Cardiac septum (tissue), 1 donor: ENCODE measurements at regions of chr5 and their contacts with region 1.

Region 1: GRCh38 chr5:36739751-36740221 is 133.4 kb downstream of the SLC1A3 start:
- DNase-seq: no peak

Region 2: DNA sequence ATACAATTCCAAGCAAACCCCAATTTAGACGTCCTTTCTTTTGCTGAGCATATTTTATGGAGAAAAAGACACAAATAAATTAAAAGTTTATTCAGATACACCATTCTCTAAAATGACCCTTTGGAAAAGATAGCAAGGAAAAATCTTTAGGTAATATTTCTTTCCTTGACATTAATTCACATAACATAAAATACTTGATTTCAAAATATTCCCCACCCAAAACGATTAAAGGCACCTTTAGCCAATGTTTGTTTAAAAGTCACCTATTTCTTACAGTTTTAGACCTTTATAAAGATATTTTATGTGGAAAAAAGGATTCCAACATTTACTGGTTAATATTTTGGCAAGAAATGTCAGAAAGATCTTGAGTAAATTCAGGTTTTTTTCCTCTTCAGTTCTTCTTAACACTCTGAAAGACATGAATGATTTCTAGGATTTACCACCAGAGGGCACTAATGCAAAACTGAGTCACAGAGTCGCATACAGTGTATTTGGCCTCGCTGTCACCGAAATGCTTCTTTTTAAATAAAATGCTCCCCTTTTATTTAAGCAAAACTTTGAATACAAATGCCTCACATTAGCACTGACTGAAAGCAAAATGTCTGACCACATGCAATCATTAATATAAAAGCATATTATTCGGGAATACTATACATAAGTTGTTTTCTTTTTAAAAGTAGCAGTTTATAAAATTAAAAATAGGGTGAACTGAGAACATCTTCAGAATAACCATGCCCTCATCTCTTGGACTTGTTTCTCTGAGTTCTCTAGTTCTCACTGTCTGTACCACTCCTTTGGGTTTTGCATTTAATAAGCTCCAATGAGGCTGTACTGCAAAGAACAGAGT is 10.9 kb before region 1 on chr5:
- intact Hi-C with region 1: no loop called
- DNase-seq: no peak

Region 3: GRCh38 chr5:36870399-36871040 is 130.7 kb after region 1 on chr5:
- intact Hi-C with region 1: loop called (anchors 5 kb)
- DNase-seq: no peak

Region 4: DNA sequence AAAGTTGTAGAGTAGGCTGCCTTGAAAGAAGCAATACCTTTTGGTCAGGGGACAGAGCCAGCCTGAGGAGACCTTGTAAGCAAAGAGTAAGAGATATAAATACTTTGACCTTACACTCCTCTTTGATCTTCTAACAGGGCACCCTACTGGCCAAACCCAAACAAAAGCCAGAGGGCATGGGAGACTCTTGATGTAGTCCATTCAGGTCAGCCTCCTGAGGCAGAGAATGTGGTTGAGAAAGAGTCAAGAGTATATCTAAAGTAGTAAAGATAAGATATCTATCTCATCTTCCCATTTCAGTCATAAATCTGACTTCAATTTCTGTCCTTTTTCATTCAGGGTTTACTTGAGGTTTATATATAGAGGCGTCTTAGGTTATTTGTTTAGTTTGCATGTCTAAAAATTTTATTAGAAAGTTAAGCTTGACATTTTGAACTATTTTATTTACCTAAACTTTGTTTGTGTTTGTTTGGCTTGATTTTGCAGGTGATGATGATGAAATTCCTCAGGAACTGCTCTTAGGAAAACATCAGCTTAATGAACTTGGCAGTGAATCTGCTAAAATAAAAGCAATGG is 262.5 kb after region 1 on chr5:
- intact Hi-C with region 1: loop called (anchors 5 kb)
- DNase-seq: no peak